Activated CD8-positive, alpha-beta memory T cell treated with anti-CD3 and anti-CD28 coated beads, Interleukin-2, amount 10 ng/mL, durations not matched to agents 7 days and 5 days (primary cell): ENCODE measurements at regions of chr10 and their contacts with region 1.

Region 1: GRCh38 chr10:133329491-133330202 is 7.0 kb downstream of the CALY start:
- DNase-seq: peak; percentile 87
- ATAC-seq: peak; percentile 92
- H3K4me3 Mint-ChIP-seq: no peak overlapping the region
- H3K27ac Mint-ChIP-seq: no peak overlapping the region
- H3K4me1 Mint-ChIP-seq: peaks cover 4% of the 10 kb centered on the region
- H3K27me3 Mint-ChIP-seq: peaks cover 74% of the 10 kb centered on the region

Region 2: GRCh38 chr10:133294189-133294588 is 35.5 kb before region 1 on chr10:
- CTCF ChIA-PET with region 1: no interaction called
- DNase-seq: no peak
- ATAC-seq: no peak
- H3K4me3 Mint-ChIP-seq: no peak overlapping the region
- H3K27ac Mint-ChIP-seq: no peak overlapping the region
- H3K4me1 Mint-ChIP-seq: peaks cover 12% of the 10 kb centered on the region
- H3K27me3 Mint-ChIP-seq: no peaks in the 10 kb centered on the region

Region 3: GRCh38 chr10:133308421-133309110 is 21.1 kb before region 1 on chr10 and contains the starts of genes TUBGCP2 and ZNF511:
- CTCF ChIA-PET with region 1: interaction called, 18 read pairs
- DNase-seq: peak; percentile 91
- ATAC-seq: peak; percentile 82
- H3K4me3 Mint-ChIP-seq: peak within 1 kb of the TSS; percentile 96
- H3K27ac Mint-ChIP-seq: peak within 1 kb of the TSS; percentile 97
- H3K4me1 Mint-ChIP-seq: peaks cover 25% of the 10 kb centered on the region
- H3K27me3 Mint-ChIP-seq: no peaks in the 10 kb centered on the region
- total RNA-seq, gene TUBGCP2: 60.4 to 64.7 TPM
- total RNA-seq, gene ZNF511: 50.7 to 60.1 TPM

Region 4: DNA sequence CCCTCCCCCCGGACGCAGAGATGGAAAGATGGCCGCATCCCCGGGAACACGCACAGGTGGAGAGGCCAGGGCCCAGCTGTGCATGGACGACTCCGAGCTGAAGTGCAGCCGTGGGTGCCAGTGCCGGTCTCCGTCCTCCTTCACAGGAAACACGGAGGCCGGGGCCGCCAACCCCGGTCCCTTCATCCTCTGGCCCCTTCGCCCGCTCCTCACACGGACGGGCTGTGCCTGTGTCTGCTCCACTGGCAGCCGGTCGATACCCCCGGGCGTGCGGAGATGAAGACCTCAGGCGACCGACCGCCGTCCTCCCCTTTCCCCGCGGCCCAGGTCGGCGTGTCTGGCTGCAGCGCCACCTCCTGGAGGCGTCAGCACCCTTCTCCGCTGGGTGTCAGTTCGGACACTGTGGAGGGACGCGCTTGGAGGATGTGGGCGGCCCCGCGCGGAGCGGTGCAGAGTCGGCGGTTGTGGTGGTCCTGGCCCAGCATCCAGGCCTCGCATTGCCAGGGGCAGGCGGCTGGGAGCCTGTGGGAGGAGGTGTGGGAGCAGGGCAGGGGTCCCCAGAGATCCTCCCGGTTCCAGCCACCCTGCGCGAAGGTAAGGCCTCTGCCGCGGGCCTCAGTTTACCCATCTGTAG is 11.0 kb before region 1 on chr10:
- CTCF ChIA-PET with region 1: interaction called, 18 read pairs
- DNase-seq: peak; percentile 77
- ATAC-seq: peak; percentile 93
- H3K4me3 Mint-ChIP-seq: peak overlapping the region; percentile 29
- H3K27ac Mint-ChIP-seq: no peak overlapping the region
- H3K4me1 Mint-ChIP-seq: peaks cover 4% of the 10 kb centered on the region
- H3K27me3 Mint-ChIP-seq: peaks cover 10% of the 10 kb centered on the region

Region 5: GRCh38 chr10:133388973-133389818 is 59.5 kb after region 1 on chr10:
- CTCF ChIA-PET with region 1: interaction called, 30 read pairs
- DNase-seq: peak; percentile 79
- ATAC-seq: peak; percentile 59
- H3K4me3 Mint-ChIP-seq: peak overlapping the region; percentile 71
- H3K27ac Mint-ChIP-seq: peak overlapping the region; percentile 93
- H3K4me1 Mint-ChIP-seq: peaks cover 45% of the 10 kb centered on the region
- H3K27me3 Mint-ChIP-seq: no peaks in the 10 kb centered on the region

Region 6: DNA sequence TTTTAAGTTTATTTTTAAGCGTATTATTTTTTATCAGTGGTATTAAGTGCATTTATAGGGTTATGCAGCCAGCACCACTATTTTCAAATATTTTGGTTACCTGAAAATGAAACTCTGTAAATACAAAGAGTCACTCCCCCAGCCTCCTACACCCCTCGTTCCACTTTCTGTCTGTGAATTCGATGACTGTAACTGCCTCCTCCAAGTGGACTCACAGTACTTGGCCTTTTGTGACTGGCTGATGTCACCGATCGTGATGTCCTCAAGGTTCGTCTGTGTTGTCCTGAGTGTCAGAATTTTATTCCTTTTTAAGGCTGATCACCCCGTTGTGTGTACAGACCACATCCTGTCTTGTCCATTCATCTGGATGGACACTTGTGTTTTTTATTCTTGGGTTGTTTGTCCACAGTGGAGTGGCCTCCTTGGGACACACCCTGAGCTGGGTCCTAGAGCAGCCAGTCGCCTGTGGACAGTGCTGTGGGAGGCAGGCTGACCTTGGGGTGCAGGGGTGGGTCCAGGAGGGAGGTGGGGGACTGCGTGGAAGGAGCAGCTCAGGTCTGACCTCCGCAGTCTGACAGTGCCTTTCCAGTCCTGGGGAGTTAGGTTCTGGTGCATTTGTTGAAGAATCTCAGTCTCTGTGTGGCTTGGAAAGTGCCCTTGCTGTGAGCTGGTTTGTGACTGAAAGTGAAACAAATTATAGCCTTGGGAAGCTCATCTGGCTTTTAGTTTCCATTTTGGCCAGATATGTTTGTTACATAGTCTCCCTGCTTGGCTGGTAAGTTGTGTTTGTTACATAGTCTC is 71.2 kb after region 1 on chr10:
- CTCF ChIA-PET with region 1: interaction called, 12 read pairs
- DNase-seq: no peak
- ATAC-seq: peak; percentile 89
- H3K4me3 Mint-ChIP-seq: peak overlapping the region; percentile 52
- H3K27ac Mint-ChIP-seq: peak overlapping the region; percentile 86
- H3K4me1 Mint-ChIP-seq: peaks cover 45% of the 10 kb centered on the region
- H3K27me3 Mint-ChIP-seq: no peaks in the 10 kb centered on the region

Region 7: DNA sequence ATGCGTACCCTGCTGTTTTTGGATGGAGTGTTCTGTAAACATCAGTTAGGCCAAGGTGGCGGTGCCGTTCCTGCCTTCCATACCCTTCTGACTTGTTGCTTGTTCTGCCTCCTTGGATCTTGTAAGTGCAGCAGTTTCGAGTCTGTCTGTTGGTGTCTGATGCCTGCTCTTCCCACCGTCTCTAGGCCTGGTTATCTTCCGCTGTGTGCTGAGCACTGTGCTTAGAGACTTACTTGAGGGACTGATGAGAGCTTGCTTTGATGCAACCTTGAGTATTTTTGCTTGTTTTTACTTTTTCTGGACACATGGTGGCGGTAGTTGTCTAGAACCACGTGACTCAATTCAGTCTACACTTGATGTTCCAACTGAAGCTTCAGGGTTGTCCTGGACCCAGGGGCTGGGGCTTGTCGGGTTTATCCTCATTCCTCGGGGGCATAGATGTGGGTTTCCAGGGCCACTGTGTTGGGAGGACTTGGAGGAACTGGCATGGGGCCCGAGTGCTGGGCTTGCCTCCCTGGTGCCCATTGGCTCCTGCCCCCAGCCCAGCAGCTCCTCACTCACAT is 109.1 kb after region 1 on chr10:
- CTCF ChIA-PET with region 1: interaction called, 16 read pairs
- DNase-seq: no peak
- ATAC-seq: peak; percentile 41
- H3K4me3 Mint-ChIP-seq: no peak overlapping the region
- H3K27ac Mint-ChIP-seq: no peak overlapping the region
- H3K4me1 Mint-ChIP-seq: peaks cover 21% of the 10 kb centered on the region
- H3K27me3 Mint-ChIP-seq: peaks cover 9% of the 10 kb centered on the region